ENCODE measurements at regions of chr7 and their contacts with region 1.

Region 1: GRCh38 chr7:47254081-47255006 is 327.6 kb downstream of the TNS3 start:
- DNase-seq: peak; percentile 82 to 92 (median 89)
- ATAC-seq: peak; percentile 82 to 95 (median 92)
- H3K4me3 ChIP-seq: peak overlapping the region; percentile 39 to 80 (median 61)
- H3K27ac ChIP-seq: peak overlapping the region; percentile 79 to 98 (median 90)
- H3K4me1 ChIP-seq: peaks cover 0 to 18% (median 16%) of the 10 kb centered on the region in 12 donors
- H3K27me3 ChIP-seq: no peaks in the 10 kb centered on the region
- CTCF ChIP-seq: peak; percentile 63 to 100 (median 98)
- POLR2A ChIP-seq: peak in 1 of 2 donors; percentile 57

Region 2: GRCh38 chr7:45890902-45891461 is 1363.4 kb before region 1 on chr7:
- intact Hi-C with region 1: loop called in 2 of 10 experiments (anchors 1 to 10 kb)
- DNase-seq: no peak
- ATAC-seq: no peak
- H3K4me3 ChIP-seq: no peak overlapping the region
- H3K27ac ChIP-seq: no peak overlapping the region
- H3K4me1 ChIP-seq: peaks cover 0 to 11% (median 5%) of the 10 kb centered on the region in 12 donors
- H3K27me3 ChIP-seq: peaks cover 8 to 53% (median 28%) of the 10 kb centered on the region in 9 donors
- CTCF ChIP-seq: peak; percentile 47 to 79 (median 62)
- POLR2A ChIP-seq: no peak

Region 3: GRCh38 chr7:45917658-45918057 is 1336.7 kb before region 1 on chr7:
- intact Hi-C with region 1: loop called in 9 of 10 experiments (anchors 1 to 10 kb)
- DNase-seq: peak; percentile 79 to 91 (median 83)
- ATAC-seq: peak; percentile 27 to 58 (median 50)
- H3K4me3 ChIP-seq: peak overlapping the region in 9 of 12 donors; percentile 1 to 72 (median 61)
- H3K27ac ChIP-seq: peak overlapping the region in 1 of 12 donors; percentile 27
- H3K4me1 ChIP-seq: peaks cover 0 to 44% (median 20%) of the 10 kb centered on the region in 12 donors
- H3K27me3 ChIP-seq: peaks cover 0 to 48% (median 0%) of the 10 kb centered on the region in 9 donors
- CTCF ChIP-seq: peak; percentile 83 to 98 (median 96)
- POLR2A ChIP-seq: no peak

Region 4: GRCh38 chr7:46352004-46352954 is 902.1 kb before region 1 on chr7:
- intact Hi-C with region 1: loop called in 1 of 10 experiments (anchors 10 kb)
- DNase-seq: peak in 3 of 5 donors; percentile 20 to 45 (median 23)
- ATAC-seq: peak in 2 of 4 donors; percentile 58 to 74
- H3K4me3 ChIP-seq: no peak overlapping the region
- H3K27ac ChIP-seq: no peak overlapping the region
- H3K4me1 ChIP-seq: no peaks in the 10 kb centered on the region
- H3K27me3 ChIP-seq: peaks cover 0 to 3% (median 0%) of the 10 kb centered on the region in 9 donors
- CTCF ChIP-seq: peak; percentile 37 to 77 (median 68)
- POLR2A ChIP-seq: no peak

Region 5: DNA sequence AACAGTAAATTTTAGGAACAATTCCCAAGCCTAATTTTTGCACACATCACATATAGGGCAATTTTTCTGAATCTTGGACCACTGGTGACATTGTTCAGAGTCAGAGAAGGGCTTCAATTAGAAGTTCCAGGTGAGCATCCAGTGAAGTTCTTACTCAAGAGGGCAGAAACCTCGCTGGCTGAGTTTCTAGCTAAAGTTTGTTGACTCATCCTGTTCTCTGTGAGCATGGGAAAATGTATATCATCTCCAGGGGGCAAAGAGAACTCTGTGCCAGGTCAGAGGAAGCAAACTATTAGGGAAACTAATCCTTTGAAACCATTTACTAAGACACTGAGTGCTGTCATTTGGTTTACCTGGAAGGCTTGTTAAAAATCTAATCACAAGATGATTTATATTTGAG is 637.7 kb before region 1 on chr7:
- intact Hi-C with region 1: loop called in 1 of 10 experiments (anchors 10 kb)
- DNase-seq: no peak
- ATAC-seq: no peak
- H3K4me3 ChIP-seq: no peak overlapping the region
- H3K27ac ChIP-seq: no peak overlapping the region
- H3K4me1 ChIP-seq: peaks cover 0 to 15% (median 0%) of the 10 kb centered on the region in 12 donors
- H3K27me3 ChIP-seq: no peaks in the 10 kb centered on the region
- CTCF ChIP-seq: no peak
- POLR2A ChIP-seq: no peak

Region 6: DNA sequence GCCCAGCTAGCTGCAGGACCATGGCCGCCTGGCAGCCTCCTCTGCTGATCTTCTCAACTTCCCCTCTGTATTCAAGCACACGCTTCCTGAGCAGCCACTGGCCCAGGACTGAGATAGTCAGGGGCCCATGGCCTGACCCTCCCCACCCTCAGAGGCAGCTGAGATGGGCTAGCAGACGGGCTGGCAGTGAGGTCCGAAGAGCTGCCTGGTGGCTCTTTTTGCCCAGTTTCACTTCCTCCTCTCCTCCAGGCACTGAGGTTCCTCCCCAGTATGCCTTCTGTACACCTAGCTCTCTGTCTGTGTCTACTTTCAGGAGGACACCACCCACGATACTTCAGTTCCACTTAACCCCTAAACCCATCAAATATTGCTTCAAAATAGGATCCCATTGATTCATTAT is 68.0 kb before region 1 on chr7:
- intact Hi-C with region 1: loop called in 7 of 10 experiments (anchors 2 to 5 kb)
- DNase-seq: no peak
- ATAC-seq: no peak
- H3K4me3 ChIP-seq: no peak overlapping the region
- H3K27ac ChIP-seq: peak overlapping the region in 2 of 12 donors; percentile 41 to 76
- H3K4me1 ChIP-seq: peaks cover 0 to 65% (median 21%) of the 10 kb centered on the region in 12 donors
- H3K27me3 ChIP-seq: no peaks in the 10 kb centered on the region
- CTCF ChIP-seq: no peak
- POLR2A ChIP-seq: no peak

Region 7: DNA sequence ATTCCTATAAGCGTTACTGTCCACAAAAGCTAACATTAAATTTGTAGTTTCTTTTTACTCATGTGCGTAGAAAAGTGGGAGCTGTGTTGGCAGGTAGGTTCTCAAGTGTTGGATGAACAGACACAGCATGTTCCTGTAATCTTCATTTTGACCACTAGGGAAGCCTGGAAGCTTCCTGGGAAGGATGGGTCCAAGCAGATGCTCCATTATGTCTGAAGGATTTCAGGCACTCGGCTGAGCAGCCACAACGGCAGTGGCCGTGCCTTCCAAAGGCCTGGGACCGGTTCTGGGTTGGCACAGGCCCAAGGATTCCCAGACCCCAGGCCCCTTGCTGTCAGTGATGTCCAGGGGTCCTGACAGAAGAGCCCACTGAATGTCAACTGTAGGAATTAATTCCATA is 58.7 kb before region 1 on chr7:
- intact Hi-C with region 1: loop called in 2 of 10 experiments (anchors 5 kb)
- DNase-seq: no peak
- ATAC-seq: no peak
- H3K4me3 ChIP-seq: no peak overlapping the region
- H3K27ac ChIP-seq: no peak overlapping the region
- H3K4me1 ChIP-seq: peaks cover 0 to 19% (median 4%) of the 10 kb centered on the region in 12 donors
- H3K27me3 ChIP-seq: no peaks in the 10 kb centered on the region
- CTCF ChIP-seq: peak in 3 of 12 donors; percentile 10 to 28 (median 26)
- POLR2A ChIP-seq: no peak

Measured in heart left ventricle (tissue), 16 donors.